Activated T-helper 1 cell treated with anti-CD3 and anti-CD28 coated beads, Interleukin-12 subunit alpha, Interleukin-12 subunit beta, Interleukin-2, Interleukin-4 antibody, amounts not matched to agents 30 ng/mL and 10 ng/mL and 1 ng/mL, durations not matched to agents 14 hours and 24 hours and 36 hours (primary cell): ENCODE measurements at regions of chr3 and their contacts with region 1.

Region 1: DNA sequence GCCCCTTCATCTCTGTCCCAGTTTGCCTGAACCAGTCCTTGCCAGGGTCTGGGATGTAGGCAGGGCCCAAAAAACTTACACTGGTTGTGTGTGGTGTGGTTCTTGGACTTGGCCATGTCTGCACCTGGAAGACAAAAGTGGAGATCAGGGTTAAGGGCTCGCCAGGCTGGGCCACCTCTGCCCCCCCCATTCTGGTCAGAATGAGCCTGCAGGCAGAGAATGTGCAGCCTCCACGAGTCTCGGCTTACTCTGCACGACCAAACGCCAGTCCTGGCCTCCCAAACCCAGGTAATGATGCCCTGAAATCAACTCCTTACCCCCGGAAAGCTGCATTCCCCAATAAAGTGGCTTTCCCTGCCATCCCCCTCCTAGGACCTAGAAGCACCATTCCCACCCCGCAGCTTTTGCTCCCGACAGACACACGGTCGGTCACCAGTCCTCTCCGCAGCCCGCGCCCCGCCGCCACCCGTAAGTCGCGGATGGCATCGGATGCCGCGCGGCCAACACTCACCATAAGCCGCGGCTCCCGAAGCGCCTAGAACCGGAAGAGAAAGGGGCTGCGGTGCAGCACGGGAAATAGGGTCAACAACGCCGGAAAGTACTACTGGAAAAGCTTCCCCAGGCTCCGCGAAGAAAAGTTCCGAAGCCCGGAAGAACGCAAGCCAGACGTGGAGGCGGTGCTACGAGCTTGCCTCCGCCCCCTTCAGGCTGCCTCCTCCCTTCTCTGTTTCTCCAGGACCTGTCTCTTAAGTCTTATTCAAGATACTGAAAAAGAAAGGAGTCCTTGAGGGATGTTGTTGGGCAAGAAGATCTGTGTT is at the start of gene RPL29:
- DNase-seq: peak; percentile 88
- H3K4me3 Mint-ChIP-seq: peak within 1 kb of the TSS; percentile 98
- H3K27ac Mint-ChIP-seq: peak within 1 kb of the TSS; percentile 100
- H3K4me1 Mint-ChIP-seq: peaks cover 24% of the 10 kb centered on the region
- H3K27me3 Mint-ChIP-seq: peaks cover 5% of the 10 kb centered on the region
- total RNA-seq, gene RPL29: 1,590 and 1,596 TPM in 2 replicates

Region 2: DNA sequence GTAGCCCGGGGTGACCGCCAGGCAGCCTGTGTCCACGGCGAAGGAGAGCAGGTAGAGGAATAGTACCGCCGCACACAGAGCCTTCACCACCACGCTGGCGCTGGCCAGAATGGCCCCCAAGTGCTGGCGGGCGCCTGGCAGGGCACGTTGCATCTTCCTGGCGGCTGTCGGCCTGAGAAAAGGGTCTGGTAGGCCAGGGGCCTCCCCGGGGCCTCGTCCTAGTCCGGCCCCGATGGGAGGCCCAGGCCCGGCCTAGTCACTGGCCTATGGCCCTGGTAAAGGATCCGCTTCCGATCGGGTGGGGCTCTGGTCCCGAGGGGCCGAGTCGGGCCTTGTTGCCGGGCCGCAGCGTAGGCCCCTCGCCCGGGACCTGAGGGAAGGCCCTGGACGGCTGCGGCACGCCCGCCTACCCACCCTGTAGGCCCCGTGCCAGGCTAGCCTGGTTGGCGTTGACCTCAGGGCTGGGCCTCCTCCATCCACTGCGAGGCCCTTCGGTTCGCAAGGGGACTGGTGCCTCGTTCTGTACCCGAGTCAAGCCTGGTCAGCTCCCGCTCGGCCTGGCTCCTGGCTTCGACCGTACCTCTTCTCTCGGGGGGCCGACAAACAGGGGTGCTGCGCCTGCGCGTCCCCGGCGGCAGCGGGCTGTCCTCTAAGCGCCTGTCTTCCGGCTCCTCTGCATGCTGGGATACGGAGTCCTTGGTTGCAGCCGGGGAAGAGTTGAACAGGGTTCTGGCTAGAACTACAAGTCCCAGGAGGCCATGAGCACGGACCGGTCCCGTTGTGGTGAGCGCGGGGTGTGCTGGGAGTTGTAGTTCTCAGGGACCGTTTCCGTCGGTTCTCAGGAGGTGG is 1636.4 kb before region 1 on chr3 and contains the start of gene TMEM115:
- intact Hi-C with region 1: loop called (anchors 10 kb)
- DNase-seq: peak; percentile 95
- H3K4me3 Mint-ChIP-seq: peak within 1 kb of the TSS; percentile 99
- H3K27ac Mint-ChIP-seq: peak within 1 kb of the TSS; percentile 96
- H3K4me1 Mint-ChIP-seq: peaks cover 43% of the 10 kb centered on the region
- H3K27me3 Mint-ChIP-seq: peaks cover 4% of the 10 kb centered on the region
- total RNA-seq, gene TMEM115: 23.6 and 25.4 TPM in 2 replicates

Region 3: DNA sequence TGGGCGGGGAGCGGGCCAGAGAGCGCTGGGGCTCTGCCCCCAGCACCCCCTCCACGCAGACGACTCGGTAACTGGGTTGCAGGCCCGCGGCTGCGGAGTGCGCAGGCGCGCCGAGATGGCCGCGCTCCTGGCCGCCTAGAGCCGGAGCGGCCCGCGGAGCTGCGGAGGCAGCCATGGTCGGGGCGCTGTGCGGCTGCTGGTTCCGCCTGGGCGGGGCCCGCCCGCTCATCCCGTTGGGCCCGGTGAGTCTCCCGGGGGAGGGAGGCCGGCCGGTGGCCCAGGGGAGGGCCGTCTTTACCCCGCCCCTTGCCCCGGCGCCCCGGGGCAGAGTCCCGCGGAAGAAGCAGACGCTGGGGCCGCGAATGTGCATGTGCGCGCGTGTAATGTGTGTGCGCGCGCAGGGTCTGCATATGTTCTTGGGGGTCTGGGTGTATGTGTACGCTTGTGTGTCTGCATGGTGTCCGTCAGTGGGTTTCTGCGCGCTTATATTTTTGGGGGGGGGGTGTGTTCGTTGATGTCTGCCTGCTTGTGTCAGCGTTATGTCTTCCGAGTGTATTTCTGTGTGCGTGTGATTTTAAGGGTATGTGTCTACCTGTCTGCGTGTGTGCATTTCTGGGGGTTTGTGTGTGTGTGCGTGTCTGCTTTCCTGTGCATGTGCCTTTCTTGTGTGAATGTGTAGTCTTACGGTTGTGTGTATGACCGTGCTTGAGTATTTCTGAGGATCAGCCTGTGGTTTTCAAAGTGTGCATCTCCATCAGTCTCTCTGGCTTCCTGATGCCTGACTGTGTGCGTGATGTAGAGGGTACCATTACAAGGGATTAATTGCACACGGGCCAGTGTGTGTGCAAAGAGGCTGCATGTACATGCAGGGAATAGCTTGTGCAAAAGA is 20.3 kb before region 1 on chr3 and contains the start of gene ABHD14A:
- intact Hi-C with region 1: loop called (anchors 1 kb)
- DNase-seq: peak; percentile 72
- H3K4me3 Mint-ChIP-seq: peak within 1 kb of the TSS; percentile 87
- H3K27ac Mint-ChIP-seq: peak within 1 kb of the TSS; percentile 90
- H3K4me1 Mint-ChIP-seq: peaks cover 24% of the 10 kb centered on the region
- H3K27me3 Mint-ChIP-seq: no peaks in the 10 kb centered on the region
- total RNA-seq, gene ABHD14A: 12.8 and 13.3 TPM in 2 replicates

Region 4: GRCh38 chr3:51982782-51983577 is 12.6 kb before region 1 on chr3 and contains the start of gene ACY1:
- intact Hi-C with region 1: loop called (anchors 1 kb)
- DNase-seq: peak; percentile 79
- H3K4me3 Mint-ChIP-seq: peak within 1 kb of the TSS; percentile 97
- H3K27ac Mint-ChIP-seq: peak within 1 kb of the TSS; percentile 97
- H3K4me1 Mint-ChIP-seq: peaks cover 30% of the 10 kb centered on the region
- H3K27me3 Mint-ChIP-seq: no peaks in the 10 kb centered on the region
- total RNA-seq, gene ACY1: 58.0 and 58.5 TPM in 2 replicates

Region 5: DNA sequence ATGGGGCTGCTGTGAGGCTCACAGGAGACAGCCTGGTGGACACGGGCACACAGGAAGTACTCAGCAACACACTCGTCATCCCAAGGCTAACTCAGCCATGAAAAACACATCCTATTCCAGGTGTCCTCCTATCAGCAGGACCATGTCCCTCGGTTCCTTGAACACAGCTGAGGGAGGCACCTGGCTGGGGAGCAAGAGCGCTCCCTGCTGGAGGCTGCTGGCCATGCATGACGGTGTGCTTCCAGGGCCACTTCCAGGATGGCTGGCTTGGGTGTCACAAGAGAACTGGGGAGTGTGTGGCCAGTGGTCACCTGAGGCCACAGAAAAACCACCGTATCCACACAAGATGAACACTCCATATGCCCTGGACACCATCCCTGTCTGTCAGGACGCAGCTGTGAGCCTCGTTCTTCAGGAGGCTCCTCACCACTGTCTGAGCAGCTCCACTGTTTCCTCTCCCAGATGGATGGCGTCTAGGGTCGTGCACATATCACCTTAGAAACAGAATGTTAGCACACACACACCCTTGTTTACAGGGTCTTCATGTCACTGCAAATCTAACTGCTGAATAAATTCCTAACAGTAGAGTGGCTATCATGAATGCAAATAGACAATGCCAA is 127.7 kb after region 1 on chr3:
- intact Hi-C with region 1: no loop called
- DNase-seq: peak; percentile 65
- H3K4me3 Mint-ChIP-seq: no peak overlapping the region
- H3K27ac Mint-ChIP-seq: no peak overlapping the region
- H3K4me1 Mint-ChIP-seq: peaks cover 34% of the 10 kb centered on the region
- H3K27me3 Mint-ChIP-seq: no peaks in the 10 kb centered on the region

Region 6: GRCh38 chr3:52197842-52198668 is 202.5 kb after region 1 on chr3 and contains the start of gene ALAS1:
- intact Hi-C with region 1: loop called (anchors 5 kb)
- DNase-seq: peak; percentile 96
- H3K4me3 Mint-ChIP-seq: peak within 1 kb of the TSS; percentile 100
- H3K27ac Mint-ChIP-seq: peak within 1 kb of the TSS; percentile 94
- H3K4me1 Mint-ChIP-seq: peaks cover 63% of the 10 kb centered on the region
- H3K27me3 Mint-ChIP-seq: peaks cover 2% of the 10 kb centered on the region
- total RNA-seq, gene ALAS1: 105 and 110 TPM in 2 replicates